AG04450 (cell line): ENCODE measurements at regions of chr5 and their contacts with region 1.

Region 1: GRCh38 chr5:36414869-36415282 is 113.2 kb upstream of the RANBP3L start:
- DNase-seq: peak; percentile 10
- H3K4me3 ChIP-seq: no peak overlapping the region
- H3K27ac ChIP-seq: no peak overlapping the region
- H3K27me3 ChIP-seq: no peaks in the 10 kb centered on the region
- CTCF ChIP-seq: peak; percentile 56

Region 2: DNA sequence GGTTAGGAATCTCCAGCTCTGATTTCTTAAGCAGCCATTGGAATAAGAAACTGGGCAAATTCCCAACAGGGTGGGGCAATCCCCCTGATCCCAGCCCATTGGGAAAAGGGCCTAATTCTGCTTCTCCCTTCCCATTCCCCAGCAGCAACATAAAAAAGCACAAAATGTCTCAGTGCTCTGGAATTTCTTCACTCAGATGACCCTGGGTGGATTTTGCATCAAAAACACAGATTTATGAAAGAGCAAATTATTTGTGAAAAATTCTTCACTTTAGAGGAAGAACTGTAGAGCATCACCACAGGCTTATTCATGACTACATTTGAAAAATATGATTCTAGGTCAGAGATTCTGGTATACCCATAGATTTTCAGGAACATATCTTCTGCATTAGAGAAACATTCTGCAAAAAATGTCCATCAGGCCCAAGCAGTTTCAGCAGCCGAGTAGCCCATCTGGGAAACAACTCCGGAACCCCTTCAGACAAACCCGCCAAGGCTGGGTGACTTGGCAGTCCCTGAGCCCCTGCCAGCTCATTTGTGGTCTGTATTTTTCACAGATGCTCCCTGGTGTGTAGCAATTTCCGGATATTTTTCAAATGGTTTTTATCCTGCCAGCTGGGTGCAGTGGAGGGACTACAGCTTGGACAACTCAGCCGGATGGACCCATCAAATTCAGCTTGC is 11.1 kb before region 1 on chr5:
- CTCF ChIA-PET with region 1: interaction called, 10 read pairs
- POLR2A ChIA-PET with region 1: no interaction called
- DNase-seq: peak; percentile 11
- H3K4me3 ChIP-seq: no peak overlapping the region
- H3K27ac ChIP-seq: peak overlapping the region; percentile 31
- H3K27me3 ChIP-seq: no peaks in the 10 kb centered on the region
- CTCF ChIP-seq: no peak

Region 3: GRCh38 chr5:36507332-36507952 is 92.6 kb after region 1 on chr5:
- CTCF ChIA-PET with region 1: interaction called, 237 read pairs
- POLR2A ChIA-PET with region 1: no interaction called
- DNase-seq: no peak
- H3K4me3 ChIP-seq: no peak overlapping the region
- H3K27ac ChIP-seq: no peak overlapping the region
- H3K27me3 ChIP-seq: no peaks in the 10 kb centered on the region
- CTCF ChIP-seq: peak; percentile 94

Region 4: DNA sequence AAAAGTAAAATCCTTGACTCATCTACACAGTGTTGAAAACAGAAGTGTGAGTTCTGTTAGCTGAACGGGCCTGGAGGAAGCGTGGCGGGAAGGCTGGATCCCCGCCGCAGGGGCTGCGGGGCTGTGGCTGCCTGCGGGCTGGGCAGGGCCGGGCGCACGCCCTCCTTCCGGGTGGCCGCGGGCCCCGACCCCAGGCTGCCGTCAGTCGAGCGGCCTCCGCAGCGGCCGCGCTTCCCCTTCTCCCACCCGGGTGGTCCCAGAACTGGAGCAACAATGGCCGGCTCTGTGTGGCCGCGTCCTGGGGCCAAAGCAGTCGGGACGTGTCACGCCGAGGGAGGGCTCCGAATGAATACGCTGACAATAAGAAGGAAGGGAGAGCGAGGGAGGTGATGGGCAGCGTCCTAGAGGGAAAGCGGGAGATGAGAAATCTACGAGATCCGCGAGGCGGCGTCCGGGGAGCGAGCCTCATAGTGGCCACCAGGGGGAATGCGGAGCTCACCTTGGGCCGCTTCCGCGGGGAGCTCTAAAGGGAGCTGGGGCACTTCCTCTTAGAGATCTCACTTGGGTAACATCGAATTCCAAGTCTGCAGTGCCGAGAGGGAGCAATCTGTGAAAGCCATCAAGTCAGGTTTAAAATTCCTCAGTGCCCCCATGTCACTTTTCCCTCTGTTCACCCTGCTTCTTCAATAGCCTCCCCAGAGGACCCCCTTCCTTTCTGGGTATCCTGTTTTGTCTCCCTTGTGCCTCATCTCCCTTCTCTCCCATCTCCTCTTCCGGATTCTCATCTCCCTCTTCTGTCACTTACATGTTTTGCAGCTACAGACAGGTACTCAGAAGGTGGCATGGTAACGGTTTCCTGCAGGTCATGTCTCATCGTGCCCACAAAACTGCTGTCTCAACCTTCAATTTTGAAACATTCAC is 275.4 kb after region 1 on chr5:
- CTCF ChIA-PET with region 1: interaction called, 152 read pairs
- POLR2A ChIA-PET with region 1: no interaction called
- DNase-seq: peak; percentile 33
- H3K4me3 ChIP-seq: peak overlapping the region; percentile 64
- H3K27ac ChIP-seq: no peak overlapping the region
- H3K27me3 ChIP-seq: no peaks in the 10 kb centered on the region
- CTCF ChIP-seq: peak; percentile 97

Region 5: DNA sequence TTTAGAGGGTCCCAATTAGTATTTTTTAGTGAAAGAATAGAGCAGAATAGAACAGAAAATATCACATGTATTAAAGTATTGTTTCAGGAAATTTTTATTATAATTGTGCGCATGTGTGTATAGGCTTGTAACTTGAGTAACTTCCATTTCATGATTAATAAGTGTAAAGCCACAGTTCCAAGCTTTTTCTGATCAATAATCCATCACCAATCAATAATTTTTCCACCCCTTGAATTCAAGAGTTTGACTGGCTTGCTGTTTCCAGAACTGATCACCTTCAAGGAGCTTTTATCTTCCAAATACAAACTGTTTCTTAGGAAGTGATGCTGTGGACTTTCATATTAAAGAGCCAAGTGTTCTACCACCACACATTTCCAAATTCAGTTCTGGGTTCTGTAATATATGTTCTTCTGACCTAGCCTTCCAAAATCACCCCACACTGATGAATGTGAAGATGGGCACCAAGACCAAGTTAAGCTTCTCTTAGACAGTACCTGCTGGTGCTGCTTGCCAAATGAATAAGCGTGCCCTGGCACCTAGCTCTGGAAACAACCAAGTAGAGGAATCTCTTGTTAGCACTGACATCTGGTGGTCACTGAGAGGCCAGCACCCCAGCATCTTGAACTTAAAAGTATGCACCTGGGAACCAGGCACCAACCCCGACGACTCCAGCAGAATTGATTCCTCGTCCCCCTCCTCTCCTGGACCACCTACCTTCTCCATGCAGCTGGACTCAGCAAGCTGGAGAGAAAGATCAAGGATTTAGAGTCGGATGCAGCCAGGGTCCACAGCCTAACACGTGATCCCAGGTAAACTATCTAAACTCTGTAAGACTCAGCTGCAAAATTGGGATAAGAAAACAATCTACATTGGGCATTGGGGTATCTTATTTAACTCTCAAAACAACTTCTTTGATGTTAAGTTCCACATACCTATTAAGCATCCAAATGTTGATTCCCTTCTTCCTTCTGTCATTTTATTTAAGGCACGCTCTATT is 281.1 kb after region 1 on chr5:
- CTCF ChIA-PET with region 1: interaction called, 152 read pairs
- POLR2A ChIA-PET with region 1: no interaction called
- DNase-seq: peak; percentile 21
- H3K4me3 ChIP-seq: no peak overlapping the region
- H3K27ac ChIP-seq: no peak overlapping the region
- H3K27me3 ChIP-seq: peaks cover 7% of the 10 kb centered on the region
- CTCF ChIP-seq: peak; percentile 85